SK-N-SH (cell line): ENCODE measurements at regions of chr10 and their contacts with region 1.

Region 1: DNA sequence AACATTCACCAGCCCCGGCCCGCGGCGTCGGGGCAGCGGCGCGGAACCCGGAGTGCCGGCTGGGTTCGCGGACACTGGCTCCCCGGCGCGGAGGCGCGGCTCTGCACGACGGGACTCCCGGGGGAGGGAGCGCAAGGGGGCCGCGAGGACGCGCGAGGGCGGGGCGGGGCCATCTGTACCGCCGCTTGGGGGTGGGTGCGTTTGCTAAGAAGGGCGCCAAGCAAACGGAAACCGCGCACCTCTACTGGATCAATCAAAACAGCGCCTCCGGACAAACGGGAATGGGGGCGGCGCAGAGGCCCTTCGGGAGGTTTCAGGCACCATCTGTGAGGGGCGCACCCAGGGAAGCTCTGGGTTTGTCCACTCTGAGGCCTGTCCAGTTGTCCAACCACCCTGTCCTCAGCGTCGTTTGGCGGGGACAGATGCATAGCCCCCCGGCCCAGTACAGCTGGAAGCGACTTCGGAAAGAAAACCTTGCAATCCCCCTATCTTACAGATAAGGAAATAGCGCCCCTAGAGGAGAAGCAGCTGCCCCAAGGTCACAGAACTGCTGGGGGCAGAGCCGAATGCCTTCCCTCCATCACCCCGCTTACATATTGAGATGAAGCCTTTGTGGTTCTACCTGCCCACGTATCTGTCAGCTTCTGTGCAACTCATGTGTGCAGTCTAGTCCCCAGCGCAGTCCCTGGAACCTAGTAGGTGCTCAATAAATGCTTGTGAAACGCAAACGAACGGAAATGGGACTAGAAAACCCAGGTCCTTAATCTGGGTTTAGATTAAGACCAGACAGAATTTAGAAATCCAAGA is 10.7 kb upstream of the SLIT1 start:
- DNase-seq: peak; percentile 90
- H3K4me3 ChIP-seq: peak overlapping the region; percentile 51 to 64
- H3K27ac ChIP-seq: no peak overlapping the region
- H3K4me1 ChIP-seq: peaks cover 0 to 5% of the 10 kb centered on the region in 2 experiments; a peak in 1 of 4 replicates
- H3K27me3 ChIP-seq: peaks cover 10% of the 10 kb centered on the region
- CTCF ChIP-seq: peak; percentile 79
- EP300 ChIP-seq: no peak
- RAD21 ChIP-seq: peak; percentile 64

Region 2: GRCh38 chr10:96758423-96758822 is 438.0 kb before region 1 on chr10:
- CTCF ChIA-PET with region 1: no interaction called
- POLR2A ChIA-PET with region 1: no interaction called
- DNase-seq: no peak
- H3K4me3 ChIP-seq: no peak overlapping the region
- H3K27ac ChIP-seq: no peak overlapping the region
- H3K4me1 ChIP-seq: no peaks in the 10 kb centered on the region
- H3K27me3 ChIP-seq: no peaks in the 10 kb centered on the region; the same call in 1 of the 2 replicates
- CTCF ChIP-seq: no peak
- EP300 ChIP-seq: no peak
- RAD21 ChIP-seq: no peak

Region 3: DNA sequence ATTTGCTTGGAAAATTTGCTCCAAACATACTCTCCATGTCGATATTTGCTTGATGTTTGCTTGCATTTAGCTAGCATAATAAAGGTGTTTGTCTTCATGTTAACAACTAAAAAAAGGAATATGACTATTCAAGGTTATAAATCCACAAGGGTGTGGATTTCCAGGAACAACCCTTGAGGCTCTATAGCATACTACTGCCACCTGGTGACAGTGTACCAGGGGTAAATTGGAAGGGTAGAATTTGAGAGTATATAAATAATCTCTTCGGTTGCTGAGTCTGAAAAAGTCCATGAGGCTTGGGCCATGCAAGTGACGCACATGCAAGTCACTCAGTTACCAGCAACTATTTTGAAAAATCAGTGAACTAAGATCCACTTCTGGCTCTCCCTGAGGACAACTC is 79.1 kb before region 1 on chr10:
- CTCF ChIA-PET with region 1: interaction called, 15 read pairs
- POLR2A ChIA-PET with region 1: no interaction called
- DNase-seq: no peak
- H3K4me3 ChIP-seq: no peak overlapping the region
- H3K27ac ChIP-seq: no peak overlapping the region
- H3K4me1 ChIP-seq: peaks cover 0 to 13% of the 10 kb centered on the region in 2 experiments; a peak in 1 of 4 replicates
- H3K27me3 ChIP-seq: peaks cover 3% of the 10 kb centered on the region; the same call in 1 of the 2 replicates
- CTCF ChIP-seq: no peak
- EP300 ChIP-seq: no peak
- RAD21 ChIP-seq: peak; percentile 37; the same call in 1 of the 2 replicates

Region 4: GRCh38 chr10:97138174-97138573 is 58.3 kb before region 1 on chr10:
- CTCF ChIA-PET with region 1: interaction called, 22 read pairs
- POLR2A ChIA-PET with region 1: no interaction called
- DNase-seq: no peak
- H3K4me3 ChIP-seq: no peak overlapping the region
- H3K27ac ChIP-seq: no peak overlapping the region
- H3K4me1 ChIP-seq: peaks cover 0 to 29% of the 10 kb centered on the region in 2 experiments; a peak in 2 of 4 replicates
- H3K27me3 ChIP-seq: peaks cover 23% of the 10 kb centered on the region
- CTCF ChIP-seq: no peak
- EP300 ChIP-seq: no peak
- RAD21 ChIP-seq: peak; percentile 37

Region 5: GRCh38 chr10:97179731-97180362 is 16.6 kb before region 1 on chr10:
- CTCF ChIA-PET with region 1: interaction called, 156 read pairs
- POLR2A ChIA-PET with region 1: no interaction called
- DNase-seq: peak; percentile 84
- H3K4me3 ChIP-seq: peak overlapping the region in 1 of 2 experiments; percentile 17; a peak in 1 of 4 replicates
- H3K27ac ChIP-seq: peak overlapping the region in 1 of 2 experiments; percentile 97; a peak in 2 of 4 replicates
- H3K4me1 ChIP-seq: peaks cover 0 to 68% of the 10 kb centered on the region in 2 experiments; a peak in 3 of 4 replicates
- H3K27me3 ChIP-seq: peaks cover 46% of the 10 kb centered on the region; the same call in 1 of the 2 replicates
- CTCF ChIP-seq: peak; percentile 40
- EP300 ChIP-seq: 0 out of 4 replicates have a peak, but pooled peaks of 1 of the 2 experiments have one; percentile 32
- RAD21 ChIP-seq: peak; percentile 70